ENCODE measurements at regions of chr3 and their contacts with region 1.

Region 1: DNA sequence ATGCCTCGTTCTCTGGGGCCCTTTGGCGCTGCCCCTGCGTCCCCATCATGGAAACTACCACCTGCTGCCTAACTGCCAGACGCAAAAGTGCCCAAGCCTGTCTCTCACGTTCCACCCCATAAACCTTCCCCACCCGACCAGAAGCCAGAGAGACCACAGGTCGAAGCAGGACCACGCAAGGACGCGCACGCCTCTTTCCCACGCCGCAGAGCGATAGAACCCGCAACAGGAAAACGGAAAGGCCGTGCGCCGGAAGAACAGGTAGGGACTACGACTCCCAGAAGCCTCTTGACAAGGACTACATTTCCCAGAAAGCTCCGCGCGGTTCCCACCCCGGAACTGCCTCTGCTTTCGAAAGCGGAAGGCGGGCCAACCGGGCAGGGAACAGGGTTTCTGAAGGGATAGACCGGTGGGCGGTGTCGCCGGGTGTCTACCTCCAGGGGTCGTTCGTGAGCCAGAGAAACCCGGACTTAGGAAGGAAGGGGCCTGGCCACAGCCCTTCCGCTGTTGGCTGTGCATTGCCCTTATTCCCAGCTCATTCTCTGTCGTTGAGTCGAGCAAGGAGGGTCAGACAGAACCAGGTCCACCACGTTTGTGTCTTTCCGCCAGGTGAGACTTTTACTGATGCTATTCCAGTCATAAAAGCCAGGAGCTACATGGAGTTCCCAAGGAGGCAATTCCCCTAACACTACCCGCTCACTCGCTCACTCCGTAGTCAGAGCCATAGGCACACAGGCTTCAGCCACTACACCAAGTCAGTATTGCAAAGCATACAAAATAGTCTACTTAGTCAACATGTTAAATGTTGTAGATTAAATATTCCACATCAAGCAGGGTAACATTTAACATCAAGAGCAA is 56.6 kb upstream of the ZBTB38 start:
- DNase-seq: peak; percentile 98
- H3K4me3 Mint-ChIP-seq: peak overlapping the region; percentile 86
- H3K27ac Mint-ChIP-seq: peak overlapping the region; percentile 85
- H3K4me1 Mint-ChIP-seq: peaks cover 7% of the 10 kb centered on the region
- H3K27me3 Mint-ChIP-seq: no peaks in the 10 kb centered on the region
- CTCF ChIP-seq: peak; percentile 61

Region 2: GRCh38 chr3:141231101-141231935 is 80.4 kb before region 1 on chr3 and contains the start of gene PXYLP1:
- CTCF ChIA-PET with region 1: interaction called, 44 read pairs
- POLR2A ChIA-PET with region 1: interaction called, 8 read pairs
- intact Hi-C with region 1: no loop called
- DNase-seq: peak; percentile 81
- H3K4me3 Mint-ChIP-seq: peak within 1 kb of the TSS; percentile 72
- H3K27ac Mint-ChIP-seq: peak within 1 kb of the TSS; percentile 31
- H3K4me1 Mint-ChIP-seq: peaks cover 4% of the 10 kb centered on the region
- H3K27me3 Mint-ChIP-seq: no peaks in the 10 kb centered on the region
- CTCF ChIP-seq: peak; percentile 67
- total RNA-seq, gene PXYLP1: 2.1 and 5.4 TPM in 2 replicates

Region 3: DNA sequence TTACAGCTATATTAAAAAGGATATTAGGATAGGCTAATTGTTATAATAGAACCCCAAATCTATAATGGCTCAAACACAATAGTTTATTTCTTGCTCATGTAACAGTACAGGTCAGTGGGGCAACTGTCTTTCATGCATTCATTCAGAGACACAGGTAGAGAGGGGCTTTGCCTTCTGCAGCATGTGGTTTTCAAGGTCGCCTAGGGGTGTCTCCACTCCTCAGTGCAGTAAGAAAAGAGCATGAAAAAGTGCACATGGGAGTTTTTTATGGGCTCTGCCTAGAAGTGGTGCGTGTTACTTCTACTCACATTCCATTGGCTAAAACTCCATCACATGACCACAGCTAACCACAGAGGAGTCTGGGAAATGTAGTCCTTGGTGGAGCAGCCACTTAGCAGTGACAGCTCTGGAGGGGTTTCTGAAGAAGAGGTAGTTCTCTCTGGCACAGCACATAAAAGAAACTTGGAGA is 58.4 kb after region 1 on chr3:
- CTCF ChIA-PET with region 1: interaction called, 3 read pairs
- POLR2A ChIA-PET with region 1: interaction called, 26 read pairs
- intact Hi-C with region 1: no loop called
- DNase-seq: peak; percentile 93
- H3K4me3 Mint-ChIP-seq: peak overlapping the region; percentile 73
- H3K27ac Mint-ChIP-seq: peak overlapping the region; percentile 98
- H3K4me1 Mint-ChIP-seq: peaks cover 56% of the 10 kb centered on the region
- H3K27me3 Mint-ChIP-seq: no peaks in the 10 kb centered on the region
- CTCF ChIP-seq: no peak

Region 4: GRCh38 chr3:141441381-141442364 is 129.9 kb after region 1 on chr3:
- CTCF ChIA-PET with region 1: interaction called, 10 read pairs
- POLR2A ChIA-PET with region 1: interaction called, 6 read pairs
- intact Hi-C with region 1: no loop called
- DNase-seq: peak; percentile 77
- H3K4me3 Mint-ChIP-seq: no peak overlapping the region
- H3K27ac Mint-ChIP-seq: peak overlapping the region; percentile 64
- H3K4me1 Mint-ChIP-seq: peaks cover 18% of the 10 kb centered on the region
- H3K27me3 Mint-ChIP-seq: no peaks in the 10 kb centered on the region
- CTCF ChIP-seq: peak; percentile 84

Region 5: DNA sequence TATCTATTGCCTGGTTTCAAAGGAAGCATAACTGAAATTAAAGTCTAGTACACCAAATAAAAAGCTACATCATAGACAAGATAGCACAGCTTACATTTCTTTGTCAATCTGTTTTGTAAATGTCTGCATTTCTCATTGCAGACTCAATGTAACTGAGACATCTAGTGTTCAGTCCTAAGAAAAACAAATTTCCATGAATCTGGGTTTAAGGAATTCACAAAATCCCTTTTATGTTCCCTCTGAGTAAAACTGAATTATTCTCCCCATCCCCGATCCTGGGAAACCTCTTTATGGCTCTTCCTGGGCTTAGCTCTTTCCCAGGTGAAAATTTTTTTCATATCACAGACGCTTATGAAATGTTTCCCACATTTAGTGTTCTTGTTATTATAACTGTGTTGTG is 153.5 kb after region 1 on chr3:
- CTCF ChIA-PET with region 1: interaction called, 392 read pairs
- POLR2A ChIA-PET with region 1: interaction called, 4 read pairs
- intact Hi-C with region 1: no loop called
- DNase-seq: no peak
- H3K4me3 Mint-ChIP-seq: no peak overlapping the region
- H3K27ac Mint-ChIP-seq: no peak overlapping the region
- H3K4me1 Mint-ChIP-seq: no peaks in the 10 kb centered on the region
- H3K27me3 Mint-ChIP-seq: no peaks in the 10 kb centered on the region
- CTCF ChIP-seq: peak; percentile 8

Region 6: GRCh38 chr3:141764986-141765385 is 453.3 kb after region 1 on chr3:
- CTCF ChIA-PET with region 1: no interaction called
- POLR2A ChIA-PET with region 1: no interaction called
- intact Hi-C with region 1: no loop called
- DNase-seq: no peak
- H3K4me3 Mint-ChIP-seq: no peak overlapping the region
- H3K27ac Mint-ChIP-seq: no peak overlapping the region
- H3K4me1 Mint-ChIP-seq: no peaks in the 10 kb centered on the region
- H3K27me3 Mint-ChIP-seq: no peaks in the 10 kb centered on the region
- CTCF ChIP-seq: no peak

Region 7: GRCh38 chr3:141979050-141979671 is 667.4 kb after region 1 on chr3:
- CTCF ChIA-PET with region 1: no interaction called
- POLR2A ChIA-PET with region 1: no interaction called
- intact Hi-C with region 1: no loop called
- DNase-seq: peak; percentile 67
- H3K4me3 Mint-ChIP-seq: no peak overlapping the region
- H3K27ac Mint-ChIP-seq: peak overlapping the region; percentile 19
- H3K4me1 Mint-ChIP-seq: no peaks in the 10 kb centered on the region
- H3K27me3 Mint-ChIP-seq: no peaks in the 10 kb centered on the region
- CTCF ChIP-seq: no peak

Measured in MCF 10A (cell line).